Caco-2 (cell line): ENCODE measurements at regions of chr9 and their contacts with region 1.

Region 1: GRCh38 chr9:94681508-94681907 is 42.2 kb upstream of the FBP1 start:
- DNase-seq: peak; percentile 78 to 80
- H3K4me3 ChIP-seq: no peak overlapping the region
- H3K4me3 Mint-ChIP-seq: no peak overlapping the region
- H3K27ac Mint-ChIP-seq: peak overlapping the region; percentile 42
- H3K4me1 ChIP-seq: peaks cover 12% of the 10 kb centered on the region
- H3K4me1 Mint-ChIP-seq: peaks cover 15% of the 10 kb centered on the region
- H3K27me3 ChIP-seq: no peaks in the 10 kb centered on the region
- H3K27me3 Mint-ChIP-seq: no peaks in the 10 kb centered on the region
- CTCF ChIP-seq: peak; percentile 78 to 84

Region 2: DNA sequence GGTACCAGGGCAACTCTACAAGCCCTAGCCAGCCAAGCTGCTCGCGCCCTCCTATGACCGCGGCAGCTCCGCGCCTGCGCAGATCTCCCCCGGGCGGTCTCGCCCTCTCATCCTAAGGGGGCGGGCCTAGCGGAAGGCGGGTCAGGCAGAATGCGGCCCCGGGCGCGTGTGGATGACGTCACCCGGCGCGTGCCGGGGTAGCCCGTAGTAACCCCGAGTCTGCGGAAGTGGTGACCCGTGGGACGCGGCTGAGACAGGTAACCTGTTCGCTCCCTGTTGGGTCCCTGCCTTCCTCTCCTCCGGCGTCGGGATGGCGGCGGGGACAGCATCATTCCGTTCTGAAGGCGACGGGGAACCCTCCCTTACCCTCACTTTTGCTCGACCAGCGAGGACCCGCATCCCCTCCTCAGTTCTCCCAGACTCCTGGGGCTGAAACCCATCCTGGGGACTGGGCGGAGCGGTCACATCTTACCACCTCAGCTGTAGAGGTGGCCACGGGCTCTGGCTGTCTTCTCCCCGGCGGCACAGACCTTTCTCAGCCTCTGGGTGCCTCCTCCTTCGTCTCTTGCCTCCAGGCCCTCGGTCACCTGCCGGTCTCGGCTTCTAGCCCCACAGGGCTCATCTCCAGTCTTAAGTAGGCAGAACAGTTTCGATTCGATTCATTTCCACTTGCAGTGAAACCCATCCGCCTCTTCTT is 45.1 kb after region 1 on chr9 and contains the start of gene AOPEP:
- CTCF ChIA-PET with region 1: interaction called, 6 read pairs
- POLR2A ChIA-PET with region 1: interaction called, 7 read pairs
- intact Hi-C with region 1: loop called (anchors 1 kb)
- DNase-seq: peak; percentile 98 to 99
- H3K4me3 ChIP-seq: peak within 1 kb of the TSS; percentile 72
- H3K4me3 Mint-ChIP-seq: peak within 1 kb of the TSS; percentile 98
- H3K27ac Mint-ChIP-seq: peak within 1 kb of the TSS; percentile 94
- H3K4me1 ChIP-seq: no peaks in the 10 kb centered on the region
- H3K4me1 Mint-ChIP-seq: peaks cover 5% of the 10 kb centered on the region
- H3K27me3 ChIP-seq: no peaks in the 10 kb centered on the region
- H3K27me3 Mint-ChIP-seq: no peaks in the 10 kb centered on the region
- CTCF ChIP-seq: no peak
- total RNA-seq, gene AOPEP: 61.7 and 63.3 TPM in 2 replicates

Region 3: GRCh38 chr9:95025213-95026147 is 344.0 kb after region 1 on chr9:
- CTCF ChIA-PET with region 1: no interaction called
- POLR2A ChIA-PET with region 1: no interaction called
- intact Hi-C with region 1: loop called (anchors 5 kb)
- DNase-seq: peak; percentile 59 to 63
- H3K4me3 ChIP-seq: no peak overlapping the region
- H3K4me3 Mint-ChIP-seq: no peak overlapping the region
- H3K27ac Mint-ChIP-seq: peak overlapping the region; percentile 62
- H3K4me1 ChIP-seq: peaks cover 48% of the 10 kb centered on the region
- H3K4me1 Mint-ChIP-seq: peaks cover 34% of the 10 kb centered on the region
- H3K27me3 ChIP-seq: no peaks in the 10 kb centered on the region
- H3K27me3 Mint-ChIP-seq: no peaks in the 10 kb centered on the region
- CTCF ChIP-seq: peak in 1 of 2 experiments; percentile 34

Region 4: DNA sequence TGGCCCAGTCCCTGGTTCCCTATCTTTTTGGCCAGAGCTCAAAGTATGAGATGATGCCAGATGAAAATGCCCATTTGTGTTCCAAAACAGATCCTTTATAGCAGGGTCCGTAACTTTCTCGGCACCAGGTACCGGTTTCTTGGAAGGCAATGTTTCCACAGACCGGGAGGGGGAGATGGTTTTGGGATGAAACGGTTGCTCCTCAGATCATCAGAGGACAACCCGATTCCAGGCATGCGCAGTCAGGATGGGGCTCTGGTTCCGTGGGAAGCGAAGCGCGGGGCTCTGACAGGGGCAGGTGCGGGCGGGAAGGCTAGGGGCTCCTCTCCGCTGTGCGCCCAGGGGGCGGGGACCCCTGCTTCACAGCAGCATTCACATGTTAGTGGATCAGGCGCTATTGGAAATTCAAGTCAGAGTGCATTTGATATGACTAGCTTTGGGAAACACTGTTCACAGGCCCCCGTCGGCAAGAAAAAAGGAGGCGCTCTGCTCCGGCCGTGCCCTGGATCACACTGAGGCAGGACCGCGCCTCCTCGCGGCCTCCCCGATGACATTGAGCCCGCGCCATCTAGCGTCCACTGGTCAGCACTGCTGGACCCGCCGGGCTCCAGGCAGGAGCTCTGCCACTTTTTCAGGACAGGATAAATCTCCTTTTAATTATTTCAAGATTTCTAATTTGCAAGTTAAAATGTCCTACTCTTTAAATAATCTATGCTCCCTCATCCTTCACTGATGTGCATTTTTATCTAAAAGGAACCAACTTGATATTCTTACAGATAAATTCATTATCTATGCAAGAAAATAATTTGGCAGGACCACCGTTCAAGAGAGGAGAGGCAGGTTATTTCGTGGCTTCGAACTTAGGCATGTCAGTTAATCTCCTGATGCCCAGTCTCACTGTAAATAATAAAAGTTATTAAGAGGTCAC is 446.0 kb after region 1 on chr9:
- CTCF ChIA-PET with region 1: interaction called, 8 read pairs
- POLR2A ChIA-PET with region 1: no interaction called
- intact Hi-C with region 1: loop called (anchors 2 kb)
- DNase-seq: peak; percentile 67 to 77
- H3K4me3 ChIP-seq: no peak overlapping the region
- H3K4me3 Mint-ChIP-seq: no peak overlapping the region
- H3K27ac Mint-ChIP-seq: no peak overlapping the region
- H3K4me1 ChIP-seq: no peaks in the 10 kb centered on the region
- H3K4me1 Mint-ChIP-seq: peaks cover 13% of the 10 kb centered on the region
- H3K27me3 ChIP-seq: no peaks in the 10 kb centered on the region
- H3K27me3 Mint-ChIP-seq: no peaks in the 10 kb centered on the region
- CTCF ChIP-seq: peak; percentile 71 to 95

Region 5: DNA sequence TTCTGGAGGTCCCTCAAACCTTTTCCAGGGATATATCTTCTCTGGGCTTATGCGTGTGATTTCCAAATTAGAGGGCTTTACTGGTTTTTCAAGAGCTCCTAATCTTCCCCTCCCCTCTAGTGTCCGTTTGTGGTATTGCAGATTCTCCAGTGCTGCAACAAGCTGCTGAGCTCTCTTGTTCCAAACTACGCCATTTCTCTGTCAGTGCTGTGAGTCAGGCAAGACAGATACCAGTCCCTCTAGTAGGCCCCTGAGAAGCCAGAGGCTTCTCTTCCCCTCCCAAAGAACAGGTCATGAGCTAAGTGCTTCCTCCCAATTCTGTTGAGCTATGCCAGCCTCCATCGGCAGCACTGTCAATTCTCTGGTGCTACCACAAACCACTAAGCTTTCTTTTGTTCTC is 486.5 kb after region 1 on chr9:
- CTCF ChIA-PET with region 1: interaction called, 10 read pairs
- POLR2A ChIA-PET with region 1: no interaction called
- intact Hi-C with region 1: no loop called
- DNase-seq: peak; percentile 69 to 83
- H3K4me3 ChIP-seq: no peak overlapping the region
- H3K4me3 Mint-ChIP-seq: no peak overlapping the region
- H3K27ac Mint-ChIP-seq: no peak overlapping the region
- H3K4me1 ChIP-seq: no peaks in the 10 kb centered on the region
- H3K4me1 Mint-ChIP-seq: no peaks in the 10 kb centered on the region
- H3K27me3 ChIP-seq: no peaks in the 10 kb centered on the region
- H3K27me3 Mint-ChIP-seq: no peaks in the 10 kb centered on the region
- CTCF ChIP-seq: peak; percentile 80 to 83